Posterior vena cava (tissue), 2 donors: ENCODE measurements at regions of chr17 and their contacts with region 1.

Region 1: DNA sequence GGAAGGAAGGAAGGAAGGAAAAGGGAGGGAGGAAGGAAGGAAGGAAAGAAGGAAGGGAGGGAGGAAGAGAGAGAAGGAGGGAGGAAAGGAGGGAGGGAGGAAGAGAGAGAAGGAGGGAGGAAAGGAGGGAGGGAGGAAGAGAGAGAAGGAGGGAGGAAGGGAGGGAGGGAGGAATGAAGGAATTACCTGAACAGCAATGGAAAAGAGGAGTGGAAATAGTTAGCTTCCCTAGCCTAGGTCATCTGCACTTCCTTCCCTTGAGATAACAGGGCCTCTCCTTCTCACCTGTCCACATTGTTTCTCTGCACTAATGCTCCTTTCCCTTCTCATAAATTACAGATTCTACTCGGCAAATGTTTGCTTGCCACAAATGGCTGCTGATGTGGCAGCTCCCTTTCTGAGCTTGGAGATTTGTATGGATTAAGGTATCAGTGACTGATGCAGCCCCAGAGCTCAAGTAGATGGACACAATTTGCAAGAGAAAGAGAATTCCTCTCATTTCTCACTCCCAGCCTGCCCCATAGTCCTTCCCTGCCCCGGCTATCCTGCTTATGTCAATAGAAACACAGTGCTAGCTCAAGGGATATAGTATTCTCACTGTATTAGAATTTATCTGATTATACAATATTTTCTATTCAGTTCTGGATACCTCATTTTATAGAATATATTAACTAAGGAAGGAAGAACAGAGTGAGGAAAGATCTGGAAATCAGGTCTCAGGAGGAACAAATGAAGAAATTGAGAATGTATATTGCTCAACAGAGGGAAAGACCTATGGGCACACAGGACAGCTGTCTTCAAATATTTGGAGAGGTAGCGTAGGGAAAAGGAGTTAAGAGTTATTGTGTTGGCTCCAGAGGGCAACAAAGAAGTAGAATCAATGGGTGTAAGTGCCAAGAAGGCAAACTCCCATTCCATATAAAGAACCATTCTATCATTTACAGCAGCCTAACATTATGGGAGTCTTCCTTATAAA is 14.6 kb downstream of the HOXB1 start:
- DNase-seq: no peak

Region 2: GRCh38 chr17:48426019-48426665 is 90.1 kb before region 1 on chr17:
- intact Hi-C with region 1: no loop called
- DNase-seq: no peak

Region 3: DNA sequence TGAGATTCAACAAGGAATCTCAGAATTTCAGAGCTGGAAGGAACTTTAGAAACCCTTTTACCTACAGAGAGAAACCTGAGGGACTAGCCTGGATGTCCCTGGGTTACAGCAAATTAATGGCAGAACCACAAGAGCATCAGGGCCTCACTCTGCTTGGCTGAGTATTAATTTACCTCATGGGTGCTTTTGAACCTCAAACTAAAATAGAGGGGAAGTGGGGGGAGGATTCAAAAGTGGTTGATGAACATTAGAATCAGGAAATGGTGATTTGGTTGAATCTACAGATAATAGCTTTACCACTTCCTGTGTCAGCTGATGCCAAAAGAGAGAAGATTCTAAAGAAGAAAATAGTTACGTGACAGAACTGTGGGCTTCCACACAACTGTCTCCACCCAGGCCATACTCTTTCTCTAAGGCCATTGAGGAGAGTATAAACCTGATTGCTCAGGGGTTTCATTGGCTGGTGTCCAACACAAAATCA is 74.9 kb before region 1 on chr17:
- intact Hi-C with region 1: loop called in 1 of 2 experiments (anchors 5 kb)
- DNase-seq: no peak

Region 4: GRCh38 chr17:48537316-48537715 is 21.1 kb after region 1 on chr17:
- intact Hi-C with region 1: no loop called
- DNase-seq: no peak

Region 5: DNA sequence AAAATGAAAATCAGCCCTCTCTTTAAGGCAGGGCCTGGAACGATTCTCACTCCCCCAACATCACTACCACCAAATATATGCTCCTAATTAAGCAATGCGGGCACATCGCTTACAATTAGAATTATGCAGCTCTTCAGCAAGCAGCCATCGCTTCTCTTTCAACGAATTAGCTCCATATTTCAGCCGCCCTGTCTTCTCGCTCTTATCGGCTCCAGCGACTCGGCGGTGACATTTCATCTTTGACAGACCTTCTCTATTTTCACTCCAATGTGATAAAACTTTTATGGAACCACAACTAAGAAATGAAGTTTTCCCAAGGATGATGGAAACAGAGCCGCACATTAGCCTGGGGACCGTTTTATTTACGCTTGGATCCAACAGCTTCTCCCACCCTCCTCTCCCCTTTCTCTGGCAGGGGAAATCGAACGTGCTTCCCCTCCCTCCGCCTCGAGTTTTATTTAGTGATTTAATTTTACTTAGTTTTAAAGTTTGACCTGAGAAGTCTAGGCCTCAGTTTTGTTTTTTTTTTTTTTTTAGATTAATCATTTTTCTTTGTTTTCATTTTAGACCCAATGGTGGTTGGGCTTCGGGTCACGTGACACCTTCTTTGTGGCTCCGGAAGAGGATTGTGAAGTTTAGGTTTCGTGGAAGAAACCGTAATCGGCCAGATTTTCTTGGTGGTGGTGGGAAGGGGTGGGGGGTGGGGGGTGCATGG is 31.8 kb after region 1 on chr17:
- intact Hi-C with region 1: no loop called
- DNase-seq: no peak